ENCODE measurements at regions of chrX and their contacts with region 1.

Region 1: DNA sequence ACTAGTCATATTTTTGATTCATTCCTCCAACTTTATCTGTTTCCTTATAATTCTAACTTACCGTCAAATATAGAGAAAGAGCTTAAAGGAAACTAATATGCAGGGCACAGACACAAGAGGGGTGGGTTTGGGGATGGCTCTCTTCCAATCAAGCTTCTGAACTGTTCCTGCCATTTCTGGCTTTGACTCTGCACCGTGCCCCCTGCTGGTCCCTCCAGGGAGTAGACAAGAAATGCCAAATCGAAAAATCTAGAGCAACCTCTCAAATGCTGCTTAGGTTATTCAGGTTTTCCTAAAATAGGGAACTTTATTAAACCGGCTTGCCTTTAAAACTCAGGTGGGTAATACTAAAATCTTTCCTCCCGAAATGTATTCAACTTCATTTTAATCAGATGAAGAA is 39.8 kb upstream of the VCX3A start:
- DNase-seq: no peak
- H3K4me3 ChIP-seq: no peak overlapping the region
- CTCF ChIP-seq: no peak
- POLR2A ChIP-seq: no peak

Region 2: GRCh38 chrX:6175914-6176313 is 398.8 kb before region 1 on chrX:
- intact Hi-C with region 1: loop called (anchors 5 kb)
- DNase-seq: no peak
- H3K4me3 ChIP-seq: no peak overlapping the region
- CTCF ChIP-seq: no peak
- POLR2A ChIP-seq: no peak